PC-9 (cell line): ENCODE measurements at regions of chr18 and their contacts with region 1.

Region 1: DNA sequence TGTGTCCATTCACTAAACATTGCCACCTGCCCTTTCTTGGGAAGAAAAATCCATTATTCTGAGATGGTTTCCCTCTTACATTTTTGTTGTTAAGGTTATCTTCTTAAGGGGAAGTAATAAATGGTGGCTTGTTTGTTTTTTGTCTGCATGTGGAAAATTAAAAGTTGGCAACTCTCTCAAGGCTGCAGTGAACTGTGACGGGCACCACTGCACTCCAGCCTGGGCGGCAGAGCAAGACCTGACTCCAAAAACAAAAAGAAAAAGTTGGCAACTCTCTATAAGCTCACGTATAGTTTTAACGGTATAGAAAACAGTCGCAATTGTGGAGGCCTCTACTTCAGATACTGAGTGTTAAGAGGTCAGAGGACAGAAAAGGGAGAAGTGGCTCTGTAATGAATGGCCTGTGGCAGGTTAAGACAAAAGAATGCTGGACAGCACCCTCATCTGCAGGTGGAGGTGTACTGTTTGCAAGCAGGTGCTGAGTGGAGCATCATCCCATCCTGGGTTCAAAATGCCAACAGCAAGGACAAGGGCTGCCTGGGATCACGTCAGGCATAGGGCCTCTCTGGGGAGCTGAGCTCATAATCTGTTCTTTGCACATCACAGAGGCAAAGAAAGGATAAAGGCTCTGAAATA is 16.7 kb downstream of the L3MBTL4 start:
- DNase-seq: no peak
- H3K4me3 ChIP-seq: no peak overlapping the region
- H3K27ac ChIP-seq: no peak overlapping the region
- H3K4me1 ChIP-seq: no peaks in the 10 kb centered on the region
- H3K27me3 ChIP-seq: peaks cover 5% of the 10 kb centered on the region; the same call in 1 of the 2 replicates
- CTCF ChIP-seq: no peak

Region 2: DNA sequence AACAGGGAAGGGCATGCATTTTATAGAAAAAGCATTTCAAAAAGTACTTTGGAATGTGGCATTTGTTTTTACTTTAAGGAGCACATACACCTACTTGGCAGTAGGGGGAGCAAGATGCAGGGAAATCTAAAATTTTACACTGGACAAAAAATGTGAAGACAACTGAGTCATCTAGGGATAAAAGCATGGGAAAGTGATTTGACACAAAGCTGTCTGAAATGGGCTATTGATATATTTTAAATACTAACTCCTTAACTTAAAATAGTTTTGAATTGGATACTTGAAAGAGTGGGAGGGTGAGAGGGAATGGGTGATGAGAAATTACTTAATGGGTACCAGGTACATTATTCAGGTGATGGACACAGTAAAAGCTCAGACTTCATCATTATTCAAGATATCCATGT is 518.6 kb before region 1 on chr18:
- CTCF ChIA-PET with region 1: no interaction called
- POLR2A ChIA-PET with region 1: no interaction called
- intact Hi-C with region 1: loop called (anchors 10 kb)
- DNase-seq: no peak
- H3K4me3 ChIP-seq: no peak overlapping the region
- H3K27ac ChIP-seq: no peak overlapping the region
- H3K4me1 ChIP-seq: no peaks in the 10 kb centered on the region
- H3K27me3 ChIP-seq: no peaks in the 10 kb centered on the region
- CTCF ChIP-seq: peak; percentile 77

Region 3: GRCh38 chr18:6249170-6249569 is 148.9 kb before region 1 on chr18:
- CTCF ChIA-PET with region 1: no interaction called
- POLR2A ChIA-PET with region 1: no interaction called
- intact Hi-C with region 1: no loop called
- DNase-seq: no peak
- H3K4me3 ChIP-seq: no peak overlapping the region
- H3K27ac ChIP-seq: no peak overlapping the region
- H3K4me1 ChIP-seq: no peaks in the 10 kb centered on the region
- H3K27me3 ChIP-seq: no peaks in the 10 kb centered on the region; the same call in 1 of the 2 replicates
- CTCF ChIP-seq: no peak